CD4-positive, alpha-beta memory T cell (primary cell): ENCODE measurements at regions of chr12 and their contacts with region 1.

Region 1: GRCh38 chr12:55738123-55739024 is 4.5 kb upstream of the GDF11 start:
- DNase-seq: peak; percentile 79 to 87 (median 83)
- H3K4me3 ChIP-seq: peak overlapping the region; percentile 39 to 75
- H3K4me3 Mint-ChIP-seq: peak overlapping the region; percentile 87 to 95 (median 90)
- H3K27ac ChIP-seq: peak overlapping the region; percentile 76
- H3K27ac Mint-ChIP-seq: peak overlapping the region; percentile 82 to 97 (median 96)
- H3K4me1 ChIP-seq: peaks cover 19% of the 10 kb centered on the region
- H3K4me1 Mint-ChIP-seq: peaks cover 21 to 38% (median 26%) of the 10 kb centered on the region in 4 donors
- H3K27me3 ChIP-seq: no peaks in the 10 kb centered on the region
- H3K27me3 Mint-ChIP-seq: no peaks in the 10 kb centered on the region

Region 2: GRCh38 chr12:55637467-55637866 is 100.9 kb before region 1 on chr12:
- CTCF ChIA-PET with region 1: no interaction called
- POLR2A ChIA-PET with region 1: no interaction called
- intact Hi-C with region 1: no loop called
- DNase-seq: peak; percentile 39 to 68 (median 48)
- H3K4me3 ChIP-seq: no peak overlapping the region
- H3K4me3 Mint-ChIP-seq: peak overlapping the region; percentile 56 to 83 (median 74)
- H3K27ac ChIP-seq: no peak overlapping the region
- H3K27ac Mint-ChIP-seq: peak overlapping the region; percentile 85 to 94 (median 91)
- H3K4me1 ChIP-seq: peaks cover 8% of the 10 kb centered on the region
- H3K4me1 Mint-ChIP-seq: peaks cover 9 to 19% (median 17%) of the 10 kb centered on the region in 4 donors
- H3K27me3 ChIP-seq: no peaks in the 10 kb centered on the region
- H3K27me3 Mint-ChIP-seq: peaks cover 10 to 14% of the 10 kb centered on the region in 2 donors

Region 3: DNA sequence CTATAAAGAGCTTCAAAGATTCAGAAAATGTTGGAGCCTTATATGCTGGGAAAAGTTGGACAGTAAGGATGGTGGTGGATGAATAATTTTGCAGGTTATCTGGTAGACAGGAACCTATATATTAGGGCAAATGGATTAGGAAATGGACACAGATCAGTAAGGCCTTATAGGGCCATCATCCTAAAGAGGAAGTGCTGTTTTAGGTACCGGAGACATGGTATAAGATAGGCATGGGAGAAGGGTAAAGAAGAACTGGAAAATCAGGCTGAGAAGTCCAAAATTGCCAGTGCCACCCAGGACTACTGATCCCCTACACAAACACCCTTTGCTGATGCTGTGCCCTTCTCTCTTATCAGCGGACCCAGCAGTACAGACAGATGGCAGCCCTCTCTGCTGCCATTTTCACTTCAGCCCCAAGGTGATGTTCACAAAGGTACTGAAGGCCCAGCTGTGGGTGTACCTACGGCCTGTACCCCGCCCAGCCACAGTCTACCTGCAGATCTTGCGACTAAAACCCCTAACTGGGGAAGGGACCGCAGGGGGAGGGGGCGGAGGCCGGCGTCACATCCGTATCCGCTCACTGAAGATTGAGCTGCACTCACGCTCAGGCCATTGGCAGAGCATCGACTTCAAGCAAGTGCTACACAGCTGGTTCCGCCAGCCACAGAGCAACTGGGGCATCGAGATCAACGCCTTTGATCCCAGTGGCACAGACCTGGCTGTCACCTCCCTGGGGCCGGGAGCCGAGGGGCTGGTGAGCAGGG is 10.0 kb after region 1 on chr12:
- CTCF ChIA-PET with region 1: interaction called, 37 read pairs
- POLR2A ChIA-PET with region 1: interaction called, 9 read pairs
- intact Hi-C with region 1: no loop called
- DNase-seq: no peak
- H3K4me3 ChIP-seq: no peak overlapping the region
- H3K4me3 Mint-ChIP-seq: no peak overlapping the region
- H3K27ac ChIP-seq: no peak overlapping the region
- H3K27ac Mint-ChIP-seq: peak overlapping the region in 3 of 7 donors; percentile 31 to 56 (median 33)
- H3K4me1 ChIP-seq: peaks cover 16% of the 10 kb centered on the region
- H3K4me1 Mint-ChIP-seq: peaks cover 18 to 43% (median 27%) of the 10 kb centered on the region in 4 donors
- H3K27me3 ChIP-seq: no peaks in the 10 kb centered on the region
- H3K27me3 Mint-ChIP-seq: no peaks in the 10 kb centered on the region

Region 4: DNA sequence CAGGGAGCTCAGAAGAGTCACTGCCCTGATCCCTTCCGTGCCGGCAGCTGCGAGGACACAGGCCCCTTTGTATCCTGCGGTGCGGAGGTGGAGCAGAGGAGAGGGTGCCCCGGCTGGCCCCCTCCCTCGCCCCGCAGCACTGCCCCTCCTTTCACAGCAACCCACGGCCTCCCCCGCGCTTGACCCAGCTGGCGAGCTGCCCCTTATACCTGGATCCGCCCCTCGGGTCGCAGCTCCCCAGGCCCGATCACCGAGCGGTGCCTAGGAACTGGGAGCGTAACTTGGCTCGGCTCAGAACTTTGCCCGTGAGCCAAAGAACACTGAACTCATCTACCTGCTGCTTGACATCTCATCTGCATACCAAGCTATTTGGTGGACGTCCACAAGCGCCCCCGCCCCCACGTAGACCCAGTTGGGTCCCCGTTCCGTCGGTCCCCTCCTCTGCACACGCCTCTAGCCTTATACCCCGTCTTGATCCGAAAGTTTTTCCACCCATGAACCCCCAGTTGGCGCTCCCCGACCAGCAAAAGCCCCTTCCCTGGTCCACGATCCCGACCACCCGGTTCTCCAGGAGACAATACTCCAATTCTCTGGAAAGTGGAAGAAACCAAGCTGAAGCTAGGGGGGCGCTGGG is 91.7 kb after region 1 on chr12:
- CTCF ChIA-PET with region 1: interaction called, 14 read pairs
- POLR2A ChIA-PET with region 1: interaction called, 14 read pairs
- intact Hi-C with region 1: loop called (anchors 1 kb)
- DNase-seq: peak in 4 of 5 donors; percentile 18 to 55 (median 22)
- H3K4me3 ChIP-seq: peak overlapping the region; percentile 88 to 93
- H3K4me3 Mint-ChIP-seq: peak overlapping the region; percentile 95 to 99 (median 98)
- H3K27ac ChIP-seq: peak overlapping the region; percentile 59
- H3K27ac Mint-ChIP-seq: peak overlapping the region; percentile 89 to 97 (median 95)
- H3K4me1 ChIP-seq: peaks cover 54% of the 10 kb centered on the region
- H3K4me1 Mint-ChIP-seq: peaks cover 28 to 66% (median 41%) of the 10 kb centered on the region in 4 donors
- H3K27me3 ChIP-seq: no peaks in the 10 kb centered on the region
- H3K27me3 Mint-ChIP-seq: no peaks in the 10 kb centered on the region

Region 5: GRCh38 chr12:55996715-55997534 is 258.6 kb after region 1 on chr12 and contains the start of gene SUOX:
- CTCF ChIA-PET with region 1: interaction called, 26 read pairs
- POLR2A ChIA-PET with region 1: interaction called, 4 read pairs
- intact Hi-C with region 1: loop called (anchors 1 kb)
- DNase-seq: peak in 1 of 5 donors; percentile 6
- H3K4me3 ChIP-seq: peak within 1 kb of the TSS in 1 of 2 donors; percentile 18
- H3K4me3 Mint-ChIP-seq: peak within 1 kb of the TSS in 6 of 8 donors; percentile 2 to 54 (median 46)
- H3K27ac ChIP-seq: no peak within 1 kb of the TSS
- H3K27ac Mint-ChIP-seq: peak within 1 kb of the TSS in 6 of 7 donors; percentile 14 to 92 (median 62)
- H3K4me1 ChIP-seq: peaks cover 16% of the 10 kb centered on the region
- H3K4me1 Mint-ChIP-seq: peaks cover 10 to 23% (median 12%) of the 10 kb centered on the region in 4 donors
- H3K27me3 ChIP-seq: no peaks in the 10 kb centered on the region
- H3K27me3 Mint-ChIP-seq: peaks cover 0 to 1% of the 10 kb centered on the region in 2 donors
- total RNA-seq, gene SUOX: 5.4 to 5.9 TPM

Region 6: DNA sequence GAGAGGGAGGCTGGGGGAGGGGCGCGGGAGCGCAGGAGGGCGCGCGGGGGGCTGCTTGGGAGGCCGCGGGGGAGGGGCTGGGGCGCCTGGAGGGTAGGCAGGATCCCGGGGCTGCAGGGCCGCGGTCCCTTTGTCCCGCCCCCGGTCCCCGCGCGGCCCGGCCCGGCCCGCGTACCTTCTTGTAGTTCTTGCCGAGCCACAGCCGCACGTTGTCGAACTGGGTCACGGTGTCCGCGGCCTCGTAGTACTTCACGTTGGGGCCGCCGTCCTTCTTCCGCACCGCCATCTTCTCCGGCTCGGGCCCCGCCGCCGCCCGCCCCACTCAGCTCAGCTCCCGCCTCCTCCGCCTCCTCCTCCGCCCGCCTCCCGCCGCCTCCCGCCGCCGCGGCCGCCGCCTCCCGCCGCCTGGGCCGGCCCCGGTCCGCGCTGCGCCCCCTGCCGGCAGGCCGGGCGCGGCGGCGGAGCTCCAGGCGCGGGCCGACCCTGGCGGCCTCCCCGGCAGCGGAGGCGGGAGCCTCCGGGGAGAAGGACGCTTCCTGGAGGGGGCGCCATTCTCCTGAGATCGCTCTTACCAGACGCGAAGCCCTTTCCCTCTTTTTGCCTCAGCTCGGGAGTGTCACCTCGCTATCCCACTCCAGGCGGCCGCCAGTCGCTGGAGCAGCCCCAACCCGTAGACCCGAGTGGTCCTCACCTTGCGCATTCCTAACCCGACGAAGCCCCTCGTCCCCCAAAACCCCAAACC is 451.0 kb after region 1 on chr12 and contains the start of gene SMARCC2:
- CTCF ChIA-PET with region 1: interaction called, 16 read pairs
- POLR2A ChIA-PET with region 1: interaction called, 20 read pairs
- intact Hi-C with region 1: loop called (anchors 2 kb)
- DNase-seq: peak; percentile 84 to 88 (median 85)
- H3K4me3 ChIP-seq: peak within 1 kb of the TSS; percentile 87 to 93
- H3K4me3 Mint-ChIP-seq: peak within 1 kb of the TSS; percentile 94 to 98 (median 96)
- H3K27ac ChIP-seq: peak within 1 kb of the TSS; percentile 91
- H3K27ac Mint-ChIP-seq: peak within 1 kb of the TSS; percentile 97 to 100 (median 98)
- H3K4me1 ChIP-seq: peaks cover 24% of the 10 kb centered on the region
- H3K4me1 Mint-ChIP-seq: peaks cover 27 to 54% (median 43%) of the 10 kb centered on the region in 4 donors
- H3K27me3 ChIP-seq: no peaks in the 10 kb centered on the region
- H3K27me3 Mint-ChIP-seq: peaks cover 0 to 2% of the 10 kb centered on the region in 2 donors
- total RNA-seq, gene SMARCC2: 192 to 199 TPM